ENCODE measurements at regions of chr2 and their contacts with region 1.

Region 1: GRCh38 chr2:143730155-143730952 is 601.1 kb downstream of the ARHGAP15 start:
- DNase-seq: no peak
- H3K4me3 Mint-ChIP-seq: peak overlapping the region; percentile 49
- H3K27ac Mint-ChIP-seq: peak overlapping the region; percentile 92
- H3K4me1 Mint-ChIP-seq: peaks cover 58% of the 10 kb centered on the region
- H3K27me3 Mint-ChIP-seq: no peaks in the 10 kb centered on the region

Region 2: GRCh38 chr2:143128681-143129580 is 601.4 kb before region 1 on chr2 and contains the start of gene ARHGAP15:
- intact Hi-C with region 1: loop called (anchors 2 kb)
- DNase-seq: peak; percentile 55
- H3K4me3 Mint-ChIP-seq: peak within 1 kb of the TSS; percentile 75
- H3K27ac Mint-ChIP-seq: peak within 1 kb of the TSS; percentile 93
- H3K4me1 Mint-ChIP-seq: peaks cover 40% of the 10 kb centered on the region
- H3K27me3 Mint-ChIP-seq: no peaks in the 10 kb centered on the region
- total RNA-seq, gene ARHGAP15: 64.3 and 65.3 TPM in 2 replicates

Region 3: DNA sequence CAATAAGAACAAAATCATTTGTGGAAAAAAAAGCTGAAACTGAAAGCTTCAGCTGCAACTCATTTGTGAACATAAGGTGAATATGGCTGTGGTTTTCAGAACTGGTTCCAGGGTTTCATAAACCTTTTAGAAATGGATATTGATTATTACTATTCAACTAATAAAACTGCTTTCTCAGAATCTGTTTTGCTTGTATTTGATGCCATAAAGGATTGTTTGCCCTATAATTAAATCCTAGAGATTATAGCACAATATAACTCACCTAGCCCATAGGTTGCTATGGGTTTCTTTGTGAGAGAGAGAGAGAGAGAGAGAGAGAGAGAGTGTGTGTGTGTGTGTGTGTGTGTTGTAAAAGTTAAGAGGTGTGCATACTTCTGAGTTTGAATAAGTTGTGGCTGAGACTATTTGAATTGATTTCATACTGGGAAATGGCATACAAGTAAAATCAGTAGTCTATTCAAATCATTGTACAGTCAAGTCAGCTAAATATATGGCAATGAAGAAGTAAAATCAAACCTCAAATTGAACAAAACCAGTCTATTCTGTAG is 261.9 kb before region 1 on chr2:
- intact Hi-C with region 1: loop called (anchors 1 kb)
- DNase-seq: no peak
- H3K4me3 Mint-ChIP-seq: peak overlapping the region; percentile 11
- H3K27ac Mint-ChIP-seq: peak overlapping the region; percentile 81
- H3K4me1 Mint-ChIP-seq: peaks cover 48% of the 10 kb centered on the region
- H3K27me3 Mint-ChIP-seq: no peaks in the 10 kb centered on the region

Region 4: DNA sequence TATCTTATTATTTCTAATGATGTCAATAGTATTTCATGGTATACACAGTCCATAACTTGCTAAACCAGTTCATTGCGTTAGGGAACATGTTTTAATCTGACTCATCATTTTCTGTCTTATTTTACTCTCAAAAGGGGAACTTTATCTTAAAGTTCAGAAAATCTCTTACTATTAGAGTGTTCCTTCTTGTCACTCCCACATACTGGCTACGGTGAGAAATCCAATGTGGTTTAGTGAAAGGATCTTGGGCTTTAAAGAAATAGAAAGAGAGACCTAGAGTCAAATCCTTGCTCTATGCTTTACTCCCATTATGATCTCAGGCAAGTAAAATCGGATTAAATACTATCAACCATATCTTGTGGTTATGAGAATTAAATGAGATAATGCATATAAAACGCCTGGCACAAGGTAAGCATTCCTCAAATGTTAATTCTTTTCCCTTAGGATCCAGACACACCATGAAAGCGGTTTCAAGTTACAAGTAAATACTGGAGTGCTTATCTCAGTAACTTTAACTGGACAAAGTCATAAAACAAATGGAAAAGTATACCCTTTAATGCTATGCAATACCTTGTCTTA is 25.2 kb before region 1 on chr2:
- intact Hi-C with region 1: loop called (anchors 1 kb)
- DNase-seq: no peak
- H3K4me3 Mint-ChIP-seq: no peak overlapping the region
- H3K27ac Mint-ChIP-seq: peak overlapping the region; percentile 59
- H3K4me1 Mint-ChIP-seq: peaks cover 29% of the 10 kb centered on the region
- H3K27me3 Mint-ChIP-seq: no peaks in the 10 kb centered on the region

Region 5: DNA sequence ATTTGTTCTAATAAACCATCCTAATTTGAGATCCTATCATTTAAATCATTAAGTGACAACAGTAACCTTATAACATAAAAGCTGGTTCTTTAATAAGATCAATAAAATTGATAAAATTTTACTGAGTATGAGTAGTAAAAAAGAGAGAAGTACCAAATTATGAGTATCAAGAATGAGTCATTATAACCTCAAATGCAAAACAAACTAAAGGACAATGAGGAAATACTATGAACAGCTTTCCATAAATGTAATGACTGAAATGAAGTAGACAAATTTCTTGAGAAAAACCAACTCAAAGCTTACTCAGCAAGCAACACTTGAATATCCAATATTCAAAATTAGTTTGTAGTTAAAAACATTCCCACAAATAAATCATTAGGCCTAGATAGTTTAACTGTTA is 356.6 kb after region 1 on chr2:
- intact Hi-C with region 1: loop called (anchors 2 kb)
- DNase-seq: no peak
- H3K4me3 Mint-ChIP-seq: no peak overlapping the region
- H3K27ac Mint-ChIP-seq: peak overlapping the region; percentile 11
- H3K4me1 Mint-ChIP-seq: peaks cover 11% of the 10 kb centered on the region
- H3K27me3 Mint-ChIP-seq: no peaks in the 10 kb centered on the region

Region 6: DNA sequence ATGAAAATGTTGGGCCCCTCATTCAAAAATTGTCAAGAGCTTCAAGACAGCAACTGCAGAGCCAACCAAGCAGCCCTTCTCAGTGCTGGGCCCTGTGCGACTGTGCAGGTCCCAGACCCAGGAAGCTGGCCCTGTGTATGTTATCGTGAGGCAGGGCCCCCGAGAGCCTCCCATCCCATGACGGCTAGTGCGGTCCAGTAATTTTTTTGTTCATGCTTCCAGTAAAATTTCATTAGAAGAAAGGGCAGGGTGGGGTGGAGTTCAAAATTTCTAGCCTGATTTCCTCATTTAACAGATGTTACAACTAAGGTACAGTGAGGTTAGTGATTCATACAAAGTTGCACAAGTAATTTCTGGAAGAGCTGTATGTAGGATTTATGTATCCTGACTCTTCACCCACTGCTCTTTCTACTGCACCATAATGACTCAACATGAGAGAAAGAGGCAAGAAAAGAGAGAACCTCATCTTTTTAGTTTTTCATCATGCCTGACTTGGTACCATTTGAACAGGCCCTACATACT is 684.0 kb after region 1 on chr2:
- intact Hi-C with region 1: loop called (anchors 1 kb)
- DNase-seq: no peak
- H3K4me3 Mint-ChIP-seq: no peak overlapping the region
- H3K27ac Mint-ChIP-seq: peak overlapping the region; percentile 55
- H3K4me1 Mint-ChIP-seq: peaks cover 29% of the 10 kb centered on the region
- H3K27me3 Mint-ChIP-seq: no peaks in the 10 kb centered on the region

Region 7: GRCh38 chr2:144510294-144510991 is 780.1 kb after region 1 on chr2:
- intact Hi-C with region 1: no loop called
- DNase-seq: no peak
- H3K4me3 Mint-ChIP-seq: peak overlapping the region; percentile 24
- H3K27ac Mint-ChIP-seq: peak overlapping the region; percentile 24
- H3K4me1 Mint-ChIP-seq: peaks cover 59% of the 10 kb centered on the region
- H3K27me3 Mint-ChIP-seq: peaks cover 40% of the 10 kb centered on the region

Region 8: GRCh38 chr2:144975881-144976280 is 1245.5 kb after region 1 on chr2:
- intact Hi-C with region 1: no loop called
- DNase-seq: no peak
- H3K4me3 Mint-ChIP-seq: no peak overlapping the region
- H3K27ac Mint-ChIP-seq: no peak overlapping the region
- H3K4me1 Mint-ChIP-seq: no peaks in the 10 kb centered on the region
- H3K27me3 Mint-ChIP-seq: no peaks in the 10 kb centered on the region